ENCODE measurements at regions of chr3 and their contacts with region 1.

Region 1: DNA sequence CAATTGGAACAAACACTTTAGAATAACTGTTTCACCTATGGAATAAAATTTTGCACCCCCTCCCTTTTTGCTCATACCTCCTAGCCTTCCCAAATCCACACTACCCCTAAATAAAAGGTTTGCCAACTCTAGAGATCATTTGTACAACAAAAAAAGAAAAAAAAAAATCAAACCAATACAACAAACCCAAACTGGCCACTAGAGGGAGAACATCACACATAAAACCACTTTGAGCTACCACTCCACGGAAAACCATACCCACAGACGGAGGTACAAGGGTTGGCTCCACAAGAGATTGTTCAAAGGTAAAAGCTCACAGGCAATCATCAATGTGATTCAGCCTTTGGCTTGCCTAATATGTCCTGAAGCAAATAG is 47.6 kb downstream of the SETMAR start:
- DNase-seq: peak; percentile 77
- ATAC-seq: peak; percentile 80
- H3K4me3 Mint-ChIP-seq: peak overlapping the region; percentile 71
- H3K27ac Mint-ChIP-seq: peak overlapping the region; percentile 71
- H3K4me1 Mint-ChIP-seq: peaks cover 26% of the 10 kb centered on the region
- H3K27me3 Mint-ChIP-seq: no peaks in the 10 kb centered on the region

Region 2: GRCh38 chr3:4071472-4072184 is 279.1 kb before region 1 on chr3:
- CTCF ChIA-PET with region 1: no interaction called
- DNase-seq: no peak
- ATAC-seq: no peak
- H3K4me3 Mint-ChIP-seq: no peak overlapping the region
- H3K27ac Mint-ChIP-seq: no peak overlapping the region
- H3K4me1 Mint-ChIP-seq: no peaks in the 10 kb centered on the region
- H3K27me3 Mint-ChIP-seq: no peaks in the 10 kb centered on the region

Region 3: GRCh38 chr3:4290272-4290893 is 60.4 kb before region 1 on chr3:
- CTCF ChIA-PET with region 1: no interaction called
- DNase-seq: no peak
- ATAC-seq: peak; percentile 66
- H3K4me3 Mint-ChIP-seq: no peak overlapping the region
- H3K27ac Mint-ChIP-seq: no peak overlapping the region
- H3K4me1 Mint-ChIP-seq: peaks cover 5% of the 10 kb centered on the region
- H3K27me3 Mint-ChIP-seq: peaks cover 3% of the 10 kb centered on the region

Region 4: GRCh38 chr3:4394048-4394447 is 43.3 kb after region 1 on chr3:
- CTCF ChIA-PET with region 1: interaction called, 23 read pairs
- DNase-seq: peak; percentile 84
- ATAC-seq: peak; percentile 88
- H3K4me3 Mint-ChIP-seq: peak overlapping the region; percentile 17
- H3K27ac Mint-ChIP-seq: peak overlapping the region; percentile 92
- H3K4me1 Mint-ChIP-seq: peaks cover 52% of the 10 kb centered on the region
- H3K27me3 Mint-ChIP-seq: no peaks in the 10 kb centered on the region

Region 5: GRCh38 chr3:4493014-4493940 is 142.5 kb after region 1 on chr3 and contains the start of gene ITPR1:
- CTCF ChIA-PET with region 1: interaction called, 44 read pairs
- DNase-seq: peak; percentile 99
- ATAC-seq: peak; percentile 89
- H3K4me3 Mint-ChIP-seq: peak within 1 kb of the TSS; percentile 92
- H3K27ac Mint-ChIP-seq: peak within 1 kb of the TSS; percentile 86
- H3K4me1 Mint-ChIP-seq: peaks cover 43% of the 10 kb centered on the region
- H3K27me3 Mint-ChIP-seq: peaks cover 9% of the 10 kb centered on the region
- total RNA-seq, gene ITPR1: 109 to 116 TPM

Region 6: DNA sequence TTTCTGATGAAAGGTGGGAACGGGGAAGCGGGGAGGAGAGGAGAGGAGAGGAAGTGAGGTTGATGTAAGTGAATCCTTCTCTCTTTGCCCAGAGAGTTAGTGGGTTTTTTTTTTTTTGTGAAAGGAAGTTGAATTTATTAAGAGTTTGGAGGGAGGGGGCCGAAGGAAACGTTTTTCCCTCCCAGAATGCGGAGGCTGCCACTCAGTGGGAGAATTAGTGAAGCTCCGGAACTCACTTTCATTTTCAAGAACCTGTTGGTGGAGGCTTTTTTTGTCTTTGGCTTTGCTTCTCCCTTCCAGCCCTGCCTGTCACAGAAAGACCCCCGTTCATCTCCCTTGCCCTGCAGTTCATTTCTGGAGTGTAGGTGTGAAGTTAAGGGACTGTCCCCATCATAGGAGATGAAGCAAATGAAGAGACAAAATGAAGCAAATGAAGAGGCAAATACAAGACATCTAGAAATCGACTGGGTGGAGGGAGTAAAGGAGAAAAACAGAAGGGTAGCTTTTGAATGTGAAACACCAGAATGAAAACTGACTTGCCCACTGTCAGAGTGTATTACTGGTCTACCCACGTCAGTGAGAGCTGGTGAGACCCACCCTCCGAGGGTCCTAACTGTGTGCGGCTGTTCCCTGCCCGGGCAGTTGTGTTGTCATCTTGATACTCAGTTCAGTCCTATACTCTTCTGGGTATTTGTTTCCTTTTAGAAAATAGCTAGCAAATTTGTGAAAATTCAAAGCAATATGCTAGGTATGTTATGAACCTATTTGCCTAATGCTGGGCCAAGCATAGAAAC is 233.9 kb after region 1 on chr3:
- CTCF ChIA-PET with region 1: interaction called, 21 read pairs
- DNase-seq: peak; percentile 45
- ATAC-seq: peak; percentile 45
- H3K4me3 Mint-ChIP-seq: peak overlapping the region; percentile 72
- H3K27ac Mint-ChIP-seq: peak overlapping the region; percentile 81
- H3K4me1 Mint-ChIP-seq: peaks cover 66% of the 10 kb centered on the region
- H3K27me3 Mint-ChIP-seq: no peaks in the 10 kb centered on the region